GM12878 (cell line): ENCODE measurements at regions of chr3 and their contacts with region 1.

Region 1: GRCh38 chr3:113736548-113737089 is 9.4 kb downstream of the NAA50 start:
- DNase-seq: peak; percentile 44
- ATAC-seq: peak; percentile 77
- H3K4me3 ChIP-seq: no peak overlapping the region
- H3K27ac ChIP-seq: peak overlapping the region; percentile 40; the same call in 1 of the 2 replicates
- H3K4me1 ChIP-seq: peaks cover 6% of the 10 kb centered on the region; the same call in 1 of the 2 replicates
- H3K27me3 ChIP-seq: no peaks in the 10 kb centered on the region
- CTCF ChIP-seq: peak; percentile 46 to 81 (median 69); a peak in 5 of 6 replicates
- EP300 ChIP-seq: no peak
- POLR2A ChIP-seq: no peak
- RAD21 ChIP-seq: peak; percentile 95

Region 2: DNA sequence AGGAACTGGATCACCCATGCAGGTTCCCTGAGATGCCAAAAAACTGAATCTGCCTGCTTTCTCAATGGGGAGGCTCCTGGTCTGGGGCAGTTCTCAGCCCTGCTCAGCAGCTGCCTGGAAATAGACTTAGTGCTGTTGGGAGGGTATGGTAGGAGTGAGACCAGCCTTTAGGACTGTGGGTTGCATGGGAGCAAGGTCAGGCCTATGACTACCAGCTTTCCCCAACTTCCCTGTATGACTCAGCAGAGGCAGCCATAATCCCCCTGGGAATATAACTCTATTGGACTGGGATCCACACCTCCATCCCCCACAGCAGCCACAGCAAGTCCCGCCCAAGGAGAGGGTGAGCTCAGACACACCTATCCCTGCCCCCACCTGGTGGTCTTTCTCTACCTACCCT is 382.3 kb before region 1 on chr3:
- CTCF ChIA-PET with region 1: no interaction called
- POLR2A ChIA-PET with region 1: no interaction called
- RAD21 ChIA-PET with region 1: no interaction called
- SMC1A ChIA-PET with region 1: no interaction called
- in situ Hi-C with region 1: no loop called
- intact Hi-C with region 1: no loop called
- DNase-seq: no peak
- ATAC-seq: no peak
- H3K4me3 ChIP-seq: no peak overlapping the region
- H3K27ac ChIP-seq: no peak overlapping the region
- H3K4me1 ChIP-seq: no peaks in the 10 kb centered on the region
- H3K27me3 ChIP-seq: no peaks in the 10 kb centered on the region
- CTCF ChIP-seq: no peak
- EP300 ChIP-seq: no peak
- POLR2A ChIP-seq: no peak
- RAD21 ChIP-seq: no peak

Region 3: DNA sequence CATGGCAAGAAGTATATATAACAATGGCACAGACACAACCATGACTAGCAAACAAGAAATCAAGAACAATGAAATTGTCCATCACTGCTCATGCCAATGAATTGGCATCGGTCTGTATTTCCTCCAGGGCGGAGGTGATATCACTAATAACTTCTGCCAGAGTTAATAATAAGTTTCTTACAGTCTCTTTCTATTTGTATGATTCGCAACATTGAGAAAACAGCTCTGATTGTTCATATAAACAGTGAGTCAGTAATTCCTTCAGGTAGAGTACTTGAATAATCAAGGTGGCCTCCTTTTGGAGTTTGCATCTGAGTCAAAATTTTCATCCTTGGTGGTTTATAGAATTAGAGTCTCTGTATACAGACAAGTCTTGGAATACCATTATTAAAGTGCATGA is 213.4 kb before region 1 on chr3:
- CTCF ChIA-PET with region 1: no interaction called
- POLR2A ChIA-PET with region 1: no interaction called
- RAD21 ChIA-PET with region 1: no interaction called
- SMC1A ChIA-PET with region 1: no interaction called
- in situ Hi-C with region 1: no loop called
- intact Hi-C with region 1: no loop called
- DNase-seq: no peak
- ATAC-seq: no peak
- H3K4me3 ChIP-seq: no peak overlapping the region
- H3K27ac ChIP-seq: no peak overlapping the region
- H3K4me1 ChIP-seq: no peaks in the 10 kb centered on the region
- H3K27me3 ChIP-seq: no peaks in the 10 kb centered on the region
- CTCF ChIP-seq: no peak
- EP300 ChIP-seq: no peak
- POLR2A ChIP-seq: no peak
- RAD21 ChIP-seq: no peak

Region 4: GRCh38 chr3:113721636-113722035 is 15.0 kb before region 1 on chr3:
- CTCF ChIA-PET with region 1: interaction called, 5 read pairs
- POLR2A ChIA-PET with region 1: no interaction called
- RAD21 ChIA-PET with region 1: interaction called, 5 read pairs
- SMC1A ChIA-PET with region 1: interaction called, 17 read pairs
- in situ Hi-C with region 1: no loop called
- intact Hi-C with region 1: no loop called
- DNase-seq: no peak
- ATAC-seq: no peak
- H3K4me3 ChIP-seq: no peak overlapping the region
- H3K27ac ChIP-seq: no peak overlapping the region
- H3K4me1 ChIP-seq: no peaks in the 10 kb centered on the region
- H3K27me3 ChIP-seq: no peaks in the 10 kb centered on the region
- CTCF ChIP-seq: no peak
- EP300 ChIP-seq: no peak
- POLR2A ChIP-seq: no peak
- RAD21 ChIP-seq: no peak

Region 5: GRCh38 chr3:113825090-113825489 is 88.5 kb after region 1 on chr3:
- CTCF ChIA-PET with region 1: no interaction called
- POLR2A ChIA-PET with region 1: interaction called, 4 read pairs
- RAD21 ChIA-PET with region 1: interaction called, 6 read pairs
- SMC1A ChIA-PET with region 1: interaction called, 11 read pairs
- in situ Hi-C with region 1: no loop called
- intact Hi-C with region 1: no loop called
- DNase-seq: peak; percentile 86
- ATAC-seq: peak; percentile 85
- H3K4me3 ChIP-seq: peak overlapping the region; percentile 18; the same call in 1 of the 2 replicates
- H3K27ac ChIP-seq: peak overlapping the region; percentile 49; the same call in 1 of the 2 replicates
- H3K4me1 ChIP-seq: peaks cover 41% of the 10 kb centered on the region
- H3K27me3 ChIP-seq: no peaks in the 10 kb centered on the region
- CTCF ChIP-seq: peak in 2 of 3 experiments; percentile 39 to 40; a peak in 2 of 6 replicates
- EP300 ChIP-seq: peak; percentile 34 to 65; a peak in 2 of 4 replicates
- POLR2A ChIP-seq: no peak
- RAD21 ChIP-seq: no peak

Region 6: DNA sequence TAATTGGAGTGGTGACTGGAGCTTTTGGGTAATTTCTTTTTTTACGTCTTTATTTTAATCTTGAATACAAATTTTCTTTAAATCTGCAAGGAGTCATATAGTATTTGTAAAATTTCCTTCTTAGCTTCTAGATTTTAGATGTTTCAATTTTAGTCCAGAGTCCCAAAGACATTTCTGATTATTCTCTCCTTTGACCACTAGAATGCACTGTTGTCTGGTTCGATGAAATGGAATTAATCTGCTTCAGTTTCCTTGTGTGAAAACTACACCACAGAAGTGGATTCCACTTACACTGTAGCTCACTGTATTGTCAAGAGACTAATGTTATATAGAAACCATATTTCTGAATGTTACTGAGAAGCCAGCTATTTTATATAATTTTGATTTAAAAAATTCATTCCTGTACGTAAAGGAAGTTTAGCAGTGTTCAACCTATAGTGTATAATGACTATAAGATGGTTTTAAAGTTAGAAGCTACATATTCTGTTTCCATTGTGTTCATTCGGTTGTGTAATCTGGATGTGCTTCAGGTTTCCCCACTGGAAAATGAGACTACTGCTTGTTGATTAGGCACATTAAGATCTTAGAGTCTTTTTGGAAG is 108.1 kb after region 1 on chr3:
- CTCF ChIA-PET with region 1: interaction called, 42 read pairs
- POLR2A ChIA-PET with region 1: no interaction called
- RAD21 ChIA-PET with region 1: interaction called, 13 read pairs
- SMC1A ChIA-PET with region 1: interaction called, 26 read pairs
- in situ Hi-C with region 1: no loop called
- intact Hi-C with region 1: no loop called
- DNase-seq: no peak
- ATAC-seq: peak; percentile 78
- H3K4me3 ChIP-seq: no peak overlapping the region
- H3K27ac ChIP-seq: no peak overlapping the region
- H3K4me1 ChIP-seq: no peaks in the 10 kb centered on the region
- H3K27me3 ChIP-seq: no peaks in the 10 kb centered on the region
- CTCF ChIP-seq: peak; percentile 40 to 58 (median 48)
- EP300 ChIP-seq: no peak
- POLR2A ChIP-seq: no peak
- RAD21 ChIP-seq: peak; percentile 64

Region 7: DNA sequence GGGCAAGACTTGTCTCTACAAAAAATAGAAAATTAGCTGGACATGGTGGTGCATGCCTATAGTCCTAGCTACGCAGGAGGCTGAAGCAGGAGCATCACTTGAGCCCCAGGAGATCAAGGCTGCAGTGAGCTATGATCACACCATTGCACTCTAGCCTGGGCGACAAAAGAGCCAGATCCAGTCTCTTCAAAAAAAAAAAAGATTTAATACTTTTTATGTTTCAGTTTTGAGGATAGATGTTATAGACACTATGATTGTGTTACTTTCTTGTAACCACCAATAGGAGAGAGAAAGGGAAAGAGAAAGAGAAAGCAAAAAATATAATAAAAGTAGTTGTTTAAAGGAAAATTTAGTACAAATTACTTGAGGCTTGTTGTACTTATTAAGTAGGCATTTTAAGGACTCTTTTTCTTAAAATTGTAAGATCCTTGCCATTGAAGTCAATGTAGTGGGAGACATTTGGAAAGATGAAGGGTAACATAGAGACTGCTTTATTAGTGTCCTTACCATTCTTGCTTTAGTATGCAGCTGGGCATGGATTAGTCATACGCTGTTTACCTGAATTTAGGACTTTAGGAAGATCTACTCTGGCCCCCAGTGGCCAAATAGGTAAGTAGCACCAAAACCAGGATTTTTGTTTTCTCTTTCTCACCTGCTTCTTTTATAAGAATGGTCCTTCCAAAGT is 176.1 kb after region 1 on chr3:
- CTCF ChIA-PET with region 1: interaction called, 47 read pairs
- POLR2A ChIA-PET with region 1: no interaction called
- RAD21 ChIA-PET with region 1: interaction called, 25 read pairs
- SMC1A ChIA-PET with region 1: interaction called, 29 read pairs
- in situ Hi-C with region 1: loop called (anchors 5 kb)
- intact Hi-C with region 1: loop called (anchors 1 kb)
- DNase-seq: peak; percentile 35
- ATAC-seq: peak; percentile 98
- H3K4me3 ChIP-seq: no peak overlapping the region
- H3K27ac ChIP-seq: no peak overlapping the region
- H3K4me1 ChIP-seq: no peaks in the 10 kb centered on the region
- H3K27me3 ChIP-seq: no peaks in the 10 kb centered on the region
- CTCF ChIP-seq: peak; percentile 76 to 89 (median 79)
- EP300 ChIP-seq: no peak
- POLR2A ChIP-seq: no peak
- RAD21 ChIP-seq: peak; percentile 95

Region 8: GRCh38 chr3:113927556-113927955 is 190.9 kb after region 1 on chr3:
- CTCF ChIA-PET with region 1: no interaction called
- POLR2A ChIA-PET with region 1: no interaction called
- RAD21 ChIA-PET with region 1: no interaction called
- SMC1A ChIA-PET with region 1: no interaction called
- in situ Hi-C with region 1: no loop called
- intact Hi-C with region 1: no loop called
- DNase-seq: no peak
- ATAC-seq: no peak
- H3K4me3 ChIP-seq: no peak overlapping the region
- H3K27ac ChIP-seq: no peak overlapping the region
- H3K4me1 ChIP-seq: no peaks in the 10 kb centered on the region
- H3K27me3 ChIP-seq: peaks cover 0 to 2% of the 10 kb centered on the region in 2 experiments; a peak in 1 of 4 replicates
- CTCF ChIP-seq: no peak
- EP300 ChIP-seq: no peak
- POLR2A ChIP-seq: no peak
- RAD21 ChIP-seq: no peak

Region 9: DNA sequence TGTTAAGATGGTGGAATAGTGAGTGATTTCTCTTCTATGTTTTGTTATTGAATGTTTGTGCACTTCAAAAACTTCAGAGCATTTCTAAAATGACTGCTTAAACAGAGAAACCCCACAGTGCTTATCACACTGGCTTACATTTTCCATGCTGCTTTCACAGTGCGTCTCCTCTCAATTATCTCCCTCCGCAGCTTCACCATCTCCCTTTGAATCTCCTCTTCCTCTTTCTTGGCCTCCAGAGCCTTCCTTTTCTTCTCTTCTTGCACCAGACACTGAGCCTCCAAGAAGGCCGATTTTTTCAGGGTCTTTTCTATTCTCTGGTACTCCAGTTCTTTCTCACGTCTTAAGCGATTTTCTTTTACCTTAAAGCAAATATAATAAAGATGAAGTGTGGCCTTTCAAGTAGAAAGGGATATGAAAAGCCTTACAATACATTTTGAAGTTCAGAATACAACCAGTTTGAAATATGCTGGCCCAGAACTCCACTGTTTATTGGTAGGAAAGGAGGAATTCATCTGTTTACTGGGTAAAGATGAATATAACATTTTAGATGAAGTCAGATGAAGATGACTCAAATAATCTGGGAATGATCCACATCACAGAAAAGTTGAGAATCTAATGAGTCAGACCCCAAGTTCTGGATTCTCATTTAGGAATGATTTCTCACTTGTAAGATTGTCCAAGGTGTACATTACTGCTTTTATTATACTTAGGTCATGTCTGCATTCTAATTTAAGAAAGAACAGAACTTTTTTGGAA is 298.3 kb after region 1 on chr3:
- CTCF ChIA-PET with region 1: no interaction called
- POLR2A ChIA-PET with region 1: no interaction called
- RAD21 ChIA-PET with region 1: no interaction called
- SMC1A ChIA-PET with region 1: no interaction called
- in situ Hi-C with region 1: no loop called
- intact Hi-C with region 1: no loop called
- DNase-seq: no peak
- ATAC-seq: no peak
- H3K4me3 ChIP-seq: no peak overlapping the region
- H3K27ac ChIP-seq: no peak overlapping the region
- H3K4me1 ChIP-seq: no peaks in the 10 kb centered on the region
- H3K27me3 ChIP-seq: no peaks in the 10 kb centered on the region
- CTCF ChIP-seq: no peak
- EP300 ChIP-seq: no peak
- POLR2A ChIP-seq: no peak
- RAD21 ChIP-seq: no peak